HCT116 (cell line): ENCODE measurements at regions of chr2 and their contacts with region 1.

Region 1: GRCh38 chr2:152962446-152962845 is 244.0 kb downstream of the ARL6IP6 start:
- DNase-seq: no peak
- ATAC-seq: no peak
- H3K4me3 ChIP-seq: no peak overlapping the region
- H3K27ac ChIP-seq: no peak overlapping the region
- H3K4me1 ChIP-seq: no peaks in the 10 kb centered on the region
- H3K27me3 ChIP-seq: no peaks in the 10 kb centered on the region
- CTCF ChIP-seq: no peak
- POLR2A ChIP-seq: no peak
- RAD21 ChIP-seq: no peak

Region 2: DNA sequence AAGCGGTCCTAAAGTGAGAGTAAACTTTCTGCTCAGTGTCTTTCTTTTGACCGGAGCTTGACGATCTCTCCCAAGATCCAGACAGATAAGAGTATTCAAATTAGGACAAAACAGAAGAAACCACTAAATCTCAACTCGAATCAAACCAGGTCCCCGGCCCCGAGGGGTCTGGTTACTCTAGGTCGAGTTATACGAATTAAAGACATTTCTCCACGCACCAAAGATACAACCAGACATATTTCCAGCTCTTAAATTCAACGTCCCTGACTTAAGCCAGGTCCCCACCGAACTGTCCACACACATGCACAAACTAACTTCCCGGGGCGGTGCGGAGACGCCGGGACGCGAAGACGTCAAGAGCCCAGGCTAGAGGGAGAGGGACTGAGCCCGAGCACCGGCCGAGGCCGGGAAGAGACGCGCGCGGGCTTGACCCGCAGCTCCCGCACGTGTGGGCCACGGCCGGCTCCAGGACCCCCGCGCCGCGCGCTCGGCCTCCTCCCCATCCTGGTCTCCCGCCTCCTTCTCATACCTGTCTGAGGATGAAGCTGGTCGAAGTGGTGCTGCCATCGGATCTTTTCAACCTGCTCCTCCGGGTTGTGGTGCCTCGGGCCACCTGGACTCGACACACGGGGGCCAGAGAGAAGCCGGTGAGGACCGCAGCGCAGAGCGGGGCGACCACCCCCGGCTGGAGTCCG is 864.5 kb before region 1 on chr2:
- CTCF ChIA-PET with region 1: no interaction called
- POLR2A ChIA-PET with region 1: no interaction called
- RAD21 ChIA-PET with region 1: no interaction called
- intact Hi-C with region 1: no loop called
- DNase-seq: no peak
- ATAC-seq: peak; percentile 61
- H3K4me3 ChIP-seq: peak overlapping the region; percentile 42 to 58
- H3K27ac ChIP-seq: peak overlapping the region; percentile 4; the same call in 1 of the 2 replicates
- H3K4me1 ChIP-seq: peaks cover 0 to 21% of the 10 kb centered on the region in 2 experiments; a peak in 2 of 4 replicates
- H3K27me3 ChIP-seq: no peaks in the 10 kb centered on the region
- CTCF ChIP-seq: no peak
- POLR2A ChIP-seq: no peak
- RAD21 ChIP-seq: no peak

Region 3: GRCh38 chr2:152910970-152911369 is 51.5 kb before region 1 on chr2:
- CTCF ChIA-PET with region 1: no interaction called
- POLR2A ChIA-PET with region 1: no interaction called
- RAD21 ChIA-PET with region 1: no interaction called
- intact Hi-C with region 1: loop called (anchors 5 kb)
- DNase-seq: no peak
- ATAC-seq: no peak
- H3K4me3 ChIP-seq: no peak overlapping the region
- H3K27ac ChIP-seq: no peak overlapping the region
- H3K4me1 ChIP-seq: no peaks in the 10 kb centered on the region
- H3K27me3 ChIP-seq: no peaks in the 10 kb centered on the region
- CTCF ChIP-seq: no peak
- POLR2A ChIP-seq: no peak
- RAD21 ChIP-seq: no peak